Heart left ventricle (tissue), 16 donors: ENCODE measurements at regions of chr4 and their contacts with region 1.

Region 1: GRCh38 chr4:157957905-157958304 is 214.9 kb downstream of the GASK1B start:
- DNase-seq: no peak
- ATAC-seq: no peak
- H3K4me3 ChIP-seq: no peak overlapping the region
- H3K27ac ChIP-seq: no peak overlapping the region
- H3K4me1 ChIP-seq: no peaks in the 10 kb centered on the region
- H3K27me3 ChIP-seq: no peaks in the 10 kb centered on the region
- CTCF ChIP-seq: no peak
- POLR2A ChIP-seq: no peak

Region 2: DNA sequence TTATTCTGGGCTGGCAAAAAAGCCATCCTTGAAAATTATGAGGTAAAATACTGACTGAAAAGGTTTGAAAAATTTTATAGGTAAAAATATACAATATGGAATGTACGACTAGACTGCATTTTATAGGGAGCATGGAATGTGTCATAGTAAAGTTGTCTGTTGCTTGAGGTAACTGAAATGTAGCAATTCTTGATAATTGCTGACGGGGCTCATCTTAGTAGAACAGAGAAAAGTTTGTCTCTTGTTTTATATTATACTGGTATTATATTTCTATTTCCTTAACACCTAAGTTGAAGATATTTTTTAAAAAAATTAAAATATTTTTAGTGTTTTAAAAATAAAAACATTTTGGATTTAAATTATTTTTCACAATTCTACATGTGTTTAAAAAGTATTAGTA is 726.4 kb before region 1 on chr4:
- intact Hi-C with region 1: loop called in 1 of 10 experiments (anchors 10 kb)
- DNase-seq: no peak
- ATAC-seq: no peak
- H3K4me3 ChIP-seq: no peak overlapping the region
- H3K27ac ChIP-seq: no peak overlapping the region
- H3K4me1 ChIP-seq: no peaks in the 10 kb centered on the region
- H3K27me3 ChIP-seq: peaks cover 0 to 3% (median 0%) of the 10 kb centered on the region in 9 donors
- CTCF ChIP-seq: no peak
- POLR2A ChIP-seq: no peak